ENCODE measurements at regions of chr11 and their contacts with region 1.

Region 1: GRCh38 chr11:65779851-65780577 is 762 bp downstream of the AP5B1 start:
- DNase-seq: peak; percentile 89
- ATAC-seq: peak; percentile 80
- H3K4me3 Mint-ChIP-seq: peak overlapping the region; percentile 87
- H3K27ac Mint-ChIP-seq: peak overlapping the region; percentile 88
- H3K4me1 Mint-ChIP-seq: peaks cover 17% of the 10 kb centered on the region
- H3K27me3 Mint-ChIP-seq: peaks cover 8% of the 10 kb centered on the region

Region 2: DNA sequence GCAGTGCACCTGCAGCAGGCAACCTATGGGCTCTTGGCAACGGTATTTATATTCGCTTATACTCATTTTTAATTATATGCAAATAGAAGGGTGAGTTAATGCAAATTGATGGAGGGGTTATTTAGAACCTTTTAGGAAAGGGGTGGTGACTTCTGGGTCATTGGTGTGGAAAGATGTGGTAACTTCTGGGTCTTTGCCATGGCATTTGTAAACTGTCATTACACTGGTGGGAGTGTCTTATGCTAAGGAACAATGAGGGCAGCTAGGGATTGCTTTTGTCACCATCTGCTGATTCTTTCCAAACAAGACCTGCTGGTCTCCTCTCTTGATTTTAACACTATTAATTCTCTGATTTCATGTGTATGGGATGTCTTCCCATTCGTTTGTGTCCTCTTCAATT is 79.6 kb before region 1 on chr11:
- CTCF ChIA-PET with region 1: interaction called, 22 read pairs
- POLR2A ChIA-PET with region 1: no interaction called
- DNase-seq: no peak
- ATAC-seq: no peak
- H3K4me3 Mint-ChIP-seq: no peak overlapping the region
- H3K27ac Mint-ChIP-seq: no peak overlapping the region
- H3K4me1 Mint-ChIP-seq: no peaks in the 10 kb centered on the region
- H3K27me3 Mint-ChIP-seq: peaks cover 21% of the 10 kb centered on the region

Region 3: DNA sequence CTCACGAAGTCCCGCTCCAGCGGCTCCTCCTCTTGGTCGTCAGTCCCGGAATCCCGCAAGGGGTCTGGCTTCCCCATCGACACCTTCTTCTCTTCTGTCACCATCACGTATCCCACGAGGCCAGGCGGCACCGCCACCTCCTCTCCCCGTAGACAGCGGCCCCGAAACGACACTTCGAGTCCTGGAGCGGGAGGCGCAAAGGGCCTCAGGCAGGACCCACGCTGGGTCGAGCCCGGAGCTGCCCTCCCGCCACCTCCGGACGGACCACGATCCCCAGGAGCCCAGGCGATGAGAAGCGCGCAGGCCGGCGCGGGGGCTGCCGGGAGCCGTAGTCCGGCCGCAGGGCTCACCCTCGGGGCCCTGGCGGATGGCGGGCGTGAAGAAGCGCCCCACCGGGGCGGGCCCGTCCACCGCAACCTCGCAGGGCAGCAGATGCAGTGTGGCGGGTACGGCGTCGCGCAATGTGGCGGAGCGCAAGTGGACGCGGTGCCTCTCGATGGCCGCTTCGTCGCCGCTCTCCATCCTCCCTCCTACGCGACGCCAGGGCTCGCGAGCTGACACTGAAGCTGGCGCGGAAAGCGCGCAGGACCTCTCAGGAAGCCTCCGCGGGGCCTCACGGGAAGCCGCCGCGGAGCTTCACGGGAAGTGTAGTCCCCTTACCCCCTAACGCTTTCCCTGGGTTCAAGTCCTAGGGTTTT is 59.6 kb before region 1 on chr11 and contains the start of gene RNASEH2C:
- CTCF ChIA-PET with region 1: interaction called, 18 read pairs
- POLR2A ChIA-PET with region 1: interaction called, 4 read pairs
- DNase-seq: peak; percentile 87
- ATAC-seq: peak; percentile 92
- H3K4me3 Mint-ChIP-seq: peak within 1 kb of the TSS; percentile 95
- H3K27ac Mint-ChIP-seq: peak within 1 kb of the TSS; percentile 89
- H3K4me1 Mint-ChIP-seq: peaks cover 36% of the 10 kb centered on the region
- H3K27me3 Mint-ChIP-seq: peaks cover 2% of the 10 kb centered on the region
- total RNA-seq, gene RNASEH2C: 88.0 to 92.3 TPM

Region 4: DNA sequence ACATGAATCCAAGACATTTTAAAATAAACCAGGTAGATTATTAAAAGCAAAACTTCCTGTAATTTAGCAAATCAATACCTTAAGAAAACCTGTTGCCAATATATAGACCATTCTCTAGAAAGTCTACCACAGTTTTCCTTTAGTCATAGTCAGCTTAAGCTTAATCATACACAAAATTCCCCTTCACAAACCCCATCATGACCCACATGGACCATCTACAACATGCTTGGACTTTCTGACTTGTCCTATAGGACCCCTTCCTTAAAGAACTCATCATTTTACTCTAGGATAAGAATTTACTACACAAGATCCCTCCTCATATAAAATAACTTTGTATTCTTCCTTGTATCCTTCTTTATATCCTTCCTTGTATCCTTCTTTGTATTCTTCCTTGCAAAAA is 43.2 kb before region 1 on chr11:
- CTCF ChIA-PET with region 1: interaction called, 17 read pairs
- POLR2A ChIA-PET with region 1: no interaction called
- DNase-seq: no peak
- ATAC-seq: no peak
- H3K4me3 Mint-ChIP-seq: no peak overlapping the region
- H3K27ac Mint-ChIP-seq: no peak overlapping the region
- H3K4me1 Mint-ChIP-seq: no peaks in the 10 kb centered on the region
- H3K27me3 Mint-ChIP-seq: peaks cover 34% of the 10 kb centered on the region

Region 5: DNA sequence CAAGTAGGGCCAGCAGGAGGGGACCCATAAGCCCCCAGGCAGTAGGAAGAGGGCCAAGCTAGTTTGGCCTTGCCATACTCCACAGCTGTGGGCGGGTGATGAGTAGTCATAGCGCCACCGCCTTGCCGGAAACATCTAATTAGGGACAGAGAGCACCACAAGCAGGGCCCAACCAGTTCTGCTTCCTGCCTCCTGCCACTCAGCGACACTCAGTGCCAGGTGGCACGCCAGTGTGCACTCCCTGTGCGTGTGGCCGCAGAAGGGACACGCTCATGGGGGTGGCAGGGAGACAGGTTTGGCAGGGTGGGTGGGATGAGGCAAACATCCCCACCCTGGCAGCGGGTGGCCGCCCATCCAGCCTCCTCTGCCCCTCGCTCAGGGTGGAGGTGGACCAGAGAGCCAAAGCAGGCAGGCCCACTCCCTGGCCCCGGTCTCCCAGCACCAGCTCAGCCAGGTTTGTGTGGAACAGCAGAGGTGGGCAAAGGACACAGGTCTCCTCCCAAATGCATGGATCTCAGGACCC is 11.7 kb after region 1 on chr11:
- CTCF ChIA-PET with region 1: interaction called, 71 read pairs
- POLR2A ChIA-PET with region 1: interaction called, 17 read pairs
- DNase-seq: peak; percentile 76
- ATAC-seq: peak; percentile 80
- H3K4me3 Mint-ChIP-seq: no peak overlapping the region
- H3K27ac Mint-ChIP-seq: peak overlapping the region; percentile 75
- H3K4me1 Mint-ChIP-seq: peaks cover 39% of the 10 kb centered on the region
- H3K27me3 Mint-ChIP-seq: peaks cover 30% of the 10 kb centered on the region

Region 6: GRCh38 chr11:65808744-65809341 is 28.8 kb after region 1 on chr11:
- CTCF ChIA-PET with region 1: interaction called, 210 read pairs
- POLR2A ChIA-PET with region 1: interaction called, 4 read pairs
- DNase-seq: no peak
- ATAC-seq: no peak
- H3K4me3 Mint-ChIP-seq: no peak overlapping the region
- H3K27ac Mint-ChIP-seq: no peak overlapping the region
- H3K4me1 Mint-ChIP-seq: peaks cover 4% of the 10 kb centered on the region
- H3K27me3 Mint-ChIP-seq: peaks cover 17% of the 10 kb centered on the region

Region 7: GRCh38 chr11:65826962-65827735 is 47.1 kb after region 1 on chr11:
- CTCF ChIA-PET with region 1: interaction called, 210 read pairs
- POLR2A ChIA-PET with region 1: no interaction called
- DNase-seq: no peak
- ATAC-seq: no peak
- H3K4me3 Mint-ChIP-seq: no peak overlapping the region
- H3K27ac Mint-ChIP-seq: no peak overlapping the region
- H3K4me1 Mint-ChIP-seq: peaks cover 10% of the 10 kb centered on the region
- H3K27me3 Mint-ChIP-seq: peaks cover 17% of the 10 kb centered on the region

Region 8: GRCh38 chr11:65868076-65868667 is 88.2 kb after region 1 on chr11:
- CTCF ChIA-PET with region 1: no interaction called
- POLR2A ChIA-PET with region 1: no interaction called
- DNase-seq: no peak
- ATAC-seq: no peak
- H3K4me3 Mint-ChIP-seq: no peak overlapping the region
- H3K27ac Mint-ChIP-seq: no peak overlapping the region
- H3K4me1 Mint-ChIP-seq: peaks cover 49% of the 10 kb centered on the region
- H3K27me3 Mint-ChIP-seq: peaks cover 3% of the 10 kb centered on the region

Region 9: DNA sequence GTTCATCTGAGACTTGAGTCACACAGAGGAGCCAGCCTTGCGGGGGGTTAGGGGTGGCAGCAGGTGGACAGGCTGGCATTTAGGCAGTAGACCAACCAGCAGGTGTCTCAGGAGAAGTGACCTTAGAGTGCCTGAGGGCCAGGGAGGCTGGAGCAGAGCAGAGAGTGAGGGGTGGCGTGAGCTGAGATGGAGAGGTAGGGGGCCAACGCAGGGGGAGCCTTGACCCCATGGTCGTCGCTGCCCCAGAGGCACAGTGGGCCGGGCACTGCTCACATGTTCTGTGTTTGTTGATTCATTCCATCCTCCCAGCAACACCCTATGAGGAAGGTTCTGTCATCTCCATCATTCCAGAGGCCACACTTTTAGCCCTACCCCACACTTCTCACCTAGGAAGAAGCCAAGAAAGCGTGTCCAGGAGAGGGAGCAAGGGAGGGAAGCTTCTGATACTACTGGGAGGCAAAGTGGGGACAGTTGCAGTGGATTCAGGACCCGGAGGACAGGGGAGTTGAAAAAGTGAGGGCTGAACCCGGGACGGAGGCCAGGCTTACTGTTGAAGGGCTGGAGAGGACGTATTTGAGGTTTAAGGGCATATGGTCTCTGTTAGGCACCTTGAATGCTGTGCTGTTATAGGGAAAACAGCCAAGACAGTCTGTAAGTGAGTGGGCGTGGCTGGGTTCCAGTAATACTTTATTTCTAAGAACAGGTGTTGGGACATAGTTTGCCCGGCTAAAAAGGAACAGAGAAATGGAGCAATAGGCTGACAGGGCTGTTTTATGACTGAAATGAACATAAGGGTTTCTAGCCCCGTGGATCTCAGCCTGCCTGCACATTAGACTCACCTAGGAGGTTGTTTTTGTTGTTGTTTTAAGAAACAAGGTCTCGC is 188.8 kb after region 1 on chr11:
- CTCF ChIA-PET with region 1: no interaction called
- POLR2A ChIA-PET with region 1: no interaction called
- DNase-seq: no peak
- ATAC-seq: no peak
- H3K4me3 Mint-ChIP-seq: no peak overlapping the region
- H3K27ac Mint-ChIP-seq: no peak overlapping the region
- H3K4me1 Mint-ChIP-seq: peaks cover 12% of the 10 kb centered on the region
- H3K27me3 Mint-ChIP-seq: no peaks in the 10 kb centered on the region